MCF 10A (cell line): ENCODE measurements at regions of chr1 and their contacts with region 1.

Region 1: GRCh38 chr1:212381397-212382035 is 33.2 kb downstream of the PACC1 start:
- DNase-seq: no peak
- H3K4me3 Mint-ChIP-seq: no peak overlapping the region
- H3K27ac Mint-ChIP-seq: no peak overlapping the region
- H3K4me1 Mint-ChIP-seq: no peaks in the 10 kb centered on the region
- H3K27me3 Mint-ChIP-seq: no peaks in the 10 kb centered on the region
- CTCF ChIP-seq: no peak

Region 2: GRCh38 chr1:211613093-211613947 is 768.2 kb before region 1 on chr1:
- CTCF ChIA-PET with region 1: no interaction called
- POLR2A ChIA-PET with region 1: no interaction called
- intact Hi-C with region 1: no loop called
- DNase-seq: peak; percentile 100
- H3K4me3 Mint-ChIP-seq: peak overlapping the region; percentile 33
- H3K27ac Mint-ChIP-seq: peak overlapping the region; percentile 61
- H3K4me1 Mint-ChIP-seq: peaks cover 37% of the 10 kb centered on the region
- H3K27me3 Mint-ChIP-seq: no peaks in the 10 kb centered on the region
- CTCF ChIP-seq: no peak

Region 3: GRCh38 chr1:212309967-212310366 is 71.5 kb before region 1 on chr1:
- CTCF ChIA-PET with region 1: no interaction called
- POLR2A ChIA-PET with region 1: no interaction called
- intact Hi-C with region 1: no loop called
- DNase-seq: no peak
- H3K4me3 Mint-ChIP-seq: no peak overlapping the region
- H3K27ac Mint-ChIP-seq: peak overlapping the region; percentile 44
- H3K4me1 Mint-ChIP-seq: peaks cover 21% of the 10 kb centered on the region
- H3K27me3 Mint-ChIP-seq: no peaks in the 10 kb centered on the region
- CTCF ChIP-seq: no peak

Region 4: GRCh38 chr1:212396638-212397037 is 15.1 kb after region 1 on chr1:
- CTCF ChIA-PET with region 1: no interaction called
- POLR2A ChIA-PET with region 1: interaction called, 11 read pairs
- intact Hi-C with region 1: no loop called
- DNase-seq: peak; percentile 24
- H3K4me3 Mint-ChIP-seq: no peak overlapping the region
- H3K27ac Mint-ChIP-seq: no peak overlapping the region
- H3K4me1 Mint-ChIP-seq: no peaks in the 10 kb centered on the region
- H3K27me3 Mint-ChIP-seq: no peaks in the 10 kb centered on the region
- CTCF ChIP-seq: no peak

Region 5: DNA sequence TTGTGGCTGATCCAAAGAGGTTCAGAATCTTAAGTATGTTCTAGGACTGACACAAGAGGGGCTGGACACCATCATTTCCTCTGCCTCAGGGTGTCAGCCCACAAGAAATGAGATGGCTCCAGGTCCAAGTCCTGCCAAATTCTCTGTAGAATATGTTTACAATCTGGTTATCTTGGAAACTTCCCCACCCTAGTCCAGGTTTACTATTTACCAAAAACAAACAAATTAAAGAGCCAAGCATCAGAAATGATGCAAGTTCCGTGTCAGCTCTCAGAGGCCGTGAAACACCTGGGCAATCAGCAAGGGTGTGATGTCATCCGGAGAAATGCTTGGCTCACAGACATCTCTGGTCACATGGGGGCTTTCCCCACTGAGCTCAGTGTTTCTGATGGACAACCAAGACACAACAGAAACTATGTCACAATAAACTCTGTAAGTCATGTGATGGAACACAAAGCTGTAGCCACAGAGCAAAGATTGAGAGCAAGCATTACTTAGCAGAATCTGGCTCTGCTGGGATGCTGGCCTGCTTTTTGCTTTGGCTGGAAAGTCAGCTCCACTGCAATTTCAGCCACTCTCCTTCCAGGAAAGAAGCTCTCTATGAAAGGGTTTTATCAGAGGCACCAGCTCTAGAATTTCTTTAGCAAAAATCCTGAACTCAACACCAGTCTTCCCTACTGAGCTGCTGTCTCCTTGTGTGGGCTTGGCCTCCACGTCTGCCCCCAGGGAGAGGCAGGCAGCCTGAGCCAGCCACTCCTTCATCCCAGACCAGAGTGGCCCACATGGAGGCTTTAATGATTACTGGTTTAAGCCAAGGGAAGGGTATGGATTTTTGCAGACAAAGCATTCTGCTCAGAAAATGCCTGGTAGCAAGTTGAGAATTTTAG is 107.1 kb after region 1 on chr1:
- CTCF ChIA-PET with region 1: no interaction called
- POLR2A ChIA-PET with region 1: no interaction called
- intact Hi-C with region 1: no loop called
- DNase-seq: peak; percentile 93
- H3K4me3 Mint-ChIP-seq: no peak overlapping the region
- H3K27ac Mint-ChIP-seq: peak overlapping the region; percentile 97
- H3K4me1 Mint-ChIP-seq: peaks cover 41% of the 10 kb centered on the region
- H3K27me3 Mint-ChIP-seq: no peaks in the 10 kb centered on the region
- CTCF ChIP-seq: no peak